ENCODE measurements at regions of chr17 and their contacts with region 1.

Region 1: DNA sequence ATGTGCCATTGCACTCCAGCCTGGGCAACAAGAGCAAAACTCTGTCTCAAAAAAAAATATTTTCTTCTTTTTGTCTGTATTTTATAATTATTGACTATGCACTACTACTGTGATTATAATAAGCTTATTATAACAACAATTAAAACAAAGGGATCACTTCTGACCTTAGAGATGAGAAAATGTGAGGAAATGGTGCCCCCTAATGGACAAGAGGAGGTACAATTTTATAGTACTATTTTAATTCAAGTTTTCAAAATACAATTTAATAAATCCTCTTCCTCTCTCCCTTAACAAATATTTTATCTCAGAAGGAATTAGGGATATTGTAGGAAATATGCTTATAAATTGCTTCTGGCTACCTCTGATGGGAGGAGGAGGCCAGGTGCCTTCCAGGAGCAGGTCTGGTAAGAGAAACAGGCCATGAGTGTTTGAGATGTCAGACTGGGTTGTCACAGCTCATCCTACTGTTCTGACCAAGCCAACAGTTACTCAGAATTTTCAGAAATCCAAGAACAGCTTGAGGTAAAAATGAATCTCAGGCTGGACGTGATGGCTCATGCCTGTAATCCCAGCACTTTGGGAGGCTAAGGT is 14.0 kb downstream of the VPS53 start:
- DNase-seq: no peak
- H3K4me3 ChIP-seq: no peak overlapping the region
- H3K27ac ChIP-seq: no peak overlapping the region
- H3K4me1 ChIP-seq: no peaks in the 10 kb centered on the region
- H3K27me3 ChIP-seq: no peaks in the 10 kb centered on the region
- CTCF ChIP-seq: peak; percentile 48 to 81 (median 76)
- POLR2A ChIP-seq: no peak

Region 2: GRCh38 chr17:412211-413015 is 288.2 kb before region 1 on chr17:
- intact Hi-C with region 1: loop called (anchors 2 kb)
- DNase-seq: peak; percentile 37
- H3K4me3 ChIP-seq: no peak overlapping the region
- H3K27ac ChIP-seq: no peak overlapping the region
- H3K4me1 ChIP-seq: no peaks in the 10 kb centered on the region
- H3K27me3 ChIP-seq: no peaks in the 10 kb centered on the region
- CTCF ChIP-seq: peak; percentile 65 to 82 (median 68)
- POLR2A ChIP-seq: no peak

Region 3: DNA sequence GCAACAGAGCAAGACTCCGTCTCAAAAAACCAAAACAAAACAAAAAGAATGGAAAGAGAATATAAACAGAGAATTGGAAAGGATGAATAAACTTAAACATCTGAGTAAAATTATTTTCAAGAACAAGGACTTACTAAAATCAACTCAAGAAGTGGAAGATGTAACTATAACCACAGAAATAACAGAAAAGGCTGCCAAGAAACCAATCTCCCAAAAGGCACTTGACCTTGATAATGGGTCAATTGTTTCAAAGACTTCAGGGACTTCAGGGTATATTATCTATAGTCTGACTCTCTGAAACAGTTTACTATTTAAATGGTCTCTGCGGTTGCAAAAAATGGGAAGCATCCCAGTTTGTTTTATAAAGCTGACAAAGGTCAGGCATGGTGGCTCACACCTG is 21.1 kb before region 1 on chr17:
- intact Hi-C with region 1: loop called (anchors 2 kb)
- DNase-seq: no peak
- H3K4me3 ChIP-seq: no peak overlapping the region
- H3K27ac ChIP-seq: no peak overlapping the region
- H3K4me1 ChIP-seq: no peaks in the 10 kb centered on the region
- H3K27me3 ChIP-seq: no peaks in the 10 kb centered on the region
- CTCF ChIP-seq: no peak
- POLR2A ChIP-seq: no peak